Activated CD8-positive, alpha-beta memory T cell treated with anti-CD3 and anti-CD28 coated beads, Interleukin-2, amount 10 ng/mL, durations not matched to agents 7 days and 5 days (primary cell): ENCODE measurements at regions of chr19 and their contacts with region 1.

Region 1: GRCh38 chr19:2887391-2887914 is 13.3 kb upstream of the ZNF57 start:
- DNase-seq: no peak
- ATAC-seq: no peak
- H3K4me3 Mint-ChIP-seq: no peak overlapping the region
- H3K27ac Mint-ChIP-seq: no peak overlapping the region
- H3K4me1 Mint-ChIP-seq: peaks cover 2% of the 10 kb centered on the region
- H3K27me3 Mint-ChIP-seq: no peaks in the 10 kb centered on the region

Region 2: DNA sequence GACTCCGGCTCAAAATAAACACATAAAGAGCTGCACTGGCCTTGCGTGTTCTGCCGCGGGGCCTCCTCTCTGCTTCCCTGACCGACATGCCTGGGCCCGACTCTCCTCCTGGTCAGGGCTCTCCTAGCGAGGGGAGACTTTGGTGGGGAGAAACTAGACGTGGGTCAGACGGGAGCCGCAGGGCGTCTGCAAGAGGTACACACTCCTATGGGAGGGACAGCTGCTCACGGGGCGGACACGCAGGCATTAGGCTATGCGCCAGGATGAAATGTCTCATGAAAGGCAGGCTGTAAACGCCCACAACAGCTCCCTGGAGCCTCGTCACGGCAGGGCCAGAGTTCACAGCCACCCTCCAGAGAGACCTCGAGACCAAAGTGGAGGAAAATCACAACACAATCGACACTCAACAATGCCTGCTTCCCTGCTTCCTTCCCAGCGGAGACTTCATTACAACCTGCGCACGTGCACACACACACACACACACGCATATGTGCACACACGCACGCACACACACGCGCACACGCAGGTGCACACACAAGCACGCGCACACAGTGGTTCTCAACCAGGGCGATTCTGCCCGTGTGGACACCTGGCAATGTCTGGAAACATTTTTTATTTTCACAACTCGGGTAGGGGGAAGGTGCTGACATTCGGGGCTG is 153.4 kb before region 1 on chr19:
- CTCF ChIA-PET with region 1: no interaction called
- DNase-seq: no peak
- ATAC-seq: no peak
- H3K4me3 Mint-ChIP-seq: no peak overlapping the region
- H3K27ac Mint-ChIP-seq: no peak overlapping the region
- H3K4me1 Mint-ChIP-seq: peaks cover 6% of the 10 kb centered on the region
- H3K27me3 Mint-ChIP-seq: no peaks in the 10 kb centered on the region

Region 3: GRCh38 chr19:2811735-2812406 is 75.6 kb before region 1 on chr19:
- CTCF ChIA-PET with region 1: no interaction called
- DNase-seq: no peak
- ATAC-seq: no peak
- H3K4me3 Mint-ChIP-seq: no peak overlapping the region
- H3K27ac Mint-ChIP-seq: no peak overlapping the region
- H3K4me1 Mint-ChIP-seq: no peaks in the 10 kb centered on the region
- H3K27me3 Mint-ChIP-seq: no peaks in the 10 kb centered on the region

Region 4: GRCh38 chr19:2900296-2901252 is 13.1 kb after region 1 on chr19 and contains the start of gene ZNF57:
- CTCF ChIA-PET with region 1: interaction called, 11 read pairs
- DNase-seq: peak; percentile 99
- ATAC-seq: peak; percentile 99
- H3K4me3 Mint-ChIP-seq: peak within 1 kb of the TSS; percentile 94
- H3K27ac Mint-ChIP-seq: peak within 1 kb of the TSS; percentile 96
- H3K4me1 Mint-ChIP-seq: peaks cover 19% of the 10 kb centered on the region
- H3K27me3 Mint-ChIP-seq: no peaks in the 10 kb centered on the region
- total RNA-seq, gene ZNF57: 4.5 to 4.6 TPM